ENCODE measurements at regions of chr2 and their contacts with region 1.

Region 1: DNA sequence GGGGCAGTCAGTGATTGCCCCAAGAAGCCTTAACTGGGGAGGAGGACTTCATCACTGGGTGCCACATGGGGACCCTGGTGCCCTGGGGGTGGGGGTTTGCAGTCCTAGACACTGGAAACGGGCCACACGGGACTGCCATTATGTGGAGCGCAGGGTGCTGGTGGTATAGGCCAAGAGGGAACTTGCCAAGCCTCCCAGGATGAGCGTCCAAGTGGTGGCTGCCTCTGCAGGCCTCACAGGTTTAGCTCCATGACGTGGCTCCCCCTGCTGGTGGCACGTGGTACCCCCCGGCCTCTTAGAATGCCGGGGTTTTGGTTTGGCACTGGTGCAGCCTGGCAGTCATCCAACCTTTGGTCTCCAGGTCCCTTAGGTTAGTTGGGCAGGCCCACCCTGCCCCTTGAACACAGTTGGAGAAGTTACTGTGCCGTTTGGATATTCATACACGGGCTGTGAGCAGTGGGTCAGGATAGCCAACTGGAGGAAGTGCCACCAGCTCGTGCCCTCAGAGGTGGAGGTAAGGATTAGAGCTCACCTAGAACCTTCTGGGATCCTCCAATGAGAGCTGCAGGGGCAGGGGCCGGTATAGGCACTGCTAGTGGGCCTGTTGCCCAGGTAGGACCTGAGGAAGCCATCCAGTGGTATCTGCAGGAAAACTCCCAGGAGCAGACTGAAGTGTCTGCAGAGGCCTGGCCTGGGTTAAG is 5.6 kb downstream of the PTMA start:
- DNase-seq: peak; percentile 87 to 91 (median 89)
- H3K4me3 ChIP-seq: no peak overlapping the region
- H3K4me3 Mint-ChIP-seq: peak overlapping the region; percentile 32 to 88 (median 66)
- H3K27ac ChIP-seq: peak overlapping the region; percentile 36
- H3K27ac Mint-ChIP-seq: peak overlapping the region; percentile 94 to 100 (median 98)
- H3K4me1 ChIP-seq: peaks cover 40% of the 10 kb centered on the region
- H3K4me1 Mint-ChIP-seq: peaks cover 24 to 47% (median 34%) of the 10 kb centered on the region in 4 donors
- H3K27me3 ChIP-seq: no peaks in the 10 kb centered on the region
- H3K27me3 Mint-ChIP-seq: no peaks in the 10 kb centered on the region

Region 2: GRCh38 chr2:231648587-231649174 is 65.2 kb before region 1 on chr2:
- CTCF ChIA-PET with region 1: interaction called, 17 read pairs
- POLR2A ChIA-PET with region 1: no interaction called
- intact Hi-C with region 1: loop called (anchors 1 kb)
- DNase-seq: peak in 4 of 5 donors; percentile 19 to 32 (median 26)
- H3K4me3 ChIP-seq: no peak overlapping the region
- H3K4me3 Mint-ChIP-seq: no peak overlapping the region
- H3K27ac ChIP-seq: no peak overlapping the region
- H3K27ac Mint-ChIP-seq: no peak overlapping the region
- H3K4me1 ChIP-seq: no peaks in the 10 kb centered on the region
- H3K4me1 Mint-ChIP-seq: peaks cover 0 to 5% (median under 1%) of the 10 kb centered on the region in 4 donors
- H3K27me3 ChIP-seq: no peaks in the 10 kb centered on the region
- H3K27me3 Mint-ChIP-seq: peaks cover 0 to 2% of the 10 kb centered on the region in 2 donors

Region 3: DNA sequence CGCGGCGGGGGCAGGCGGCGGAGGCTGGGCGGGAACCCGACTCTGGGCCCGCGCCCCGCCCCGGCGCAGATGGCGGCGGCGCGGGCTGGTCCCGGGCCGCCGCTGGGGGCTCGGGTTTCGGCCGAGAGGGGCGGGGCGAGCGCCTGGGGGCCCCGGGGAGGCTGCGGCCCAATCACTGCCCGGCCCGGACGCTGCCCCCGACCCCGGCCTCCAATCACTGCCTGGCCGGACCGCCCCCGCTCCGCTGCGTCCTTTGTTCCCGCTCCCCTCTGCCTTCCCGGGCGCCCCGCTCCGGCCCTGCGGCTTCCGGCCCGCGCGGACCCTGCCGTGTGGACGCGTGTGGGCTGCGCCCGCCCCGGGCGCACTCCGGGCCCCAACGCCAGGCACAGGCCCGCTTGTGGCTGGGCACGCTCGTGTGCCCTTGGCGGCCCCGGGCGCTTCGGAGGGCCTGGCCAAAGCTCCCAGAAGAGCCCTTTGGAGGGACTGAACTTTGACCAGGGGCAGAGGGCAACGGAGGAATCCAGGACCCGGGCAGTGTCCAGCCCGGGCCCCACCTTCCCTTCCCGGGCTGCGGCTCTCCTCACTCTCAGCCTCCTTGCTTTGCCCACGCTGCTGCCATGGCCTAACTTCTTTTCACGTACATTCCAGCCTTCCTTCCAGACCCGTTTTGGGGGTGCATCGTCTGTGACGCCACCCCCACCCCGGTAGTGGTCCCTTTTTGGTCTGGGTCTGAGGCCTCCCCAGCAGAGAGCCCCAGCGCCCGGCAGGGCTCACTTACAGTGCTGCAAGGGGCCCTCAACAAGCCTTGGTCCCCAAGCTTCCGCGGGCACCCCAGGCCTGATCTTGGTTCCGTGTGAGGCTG is 32.7 kb before region 1 on chr2:
- CTCF ChIA-PET with region 1: interaction called, 742 read pairs
- POLR2A ChIA-PET with region 1: interaction called, 136 read pairs
- intact Hi-C with region 1: loop called (anchors 1 kb)
- DNase-seq: no peak
- H3K4me3 ChIP-seq: no peak overlapping the region
- H3K4me3 Mint-ChIP-seq: peak overlapping the region in 7 of 8 donors; percentile 10 to 82 (median 58)
- H3K27ac ChIP-seq: no peak overlapping the region
- H3K27ac Mint-ChIP-seq: no peak overlapping the region
- H3K4me1 ChIP-seq: no peaks in the 10 kb centered on the region
- H3K4me1 Mint-ChIP-seq: peaks cover 3 to 11% (median 7%) of the 10 kb centered on the region in 4 donors
- H3K27me3 ChIP-seq: peaks cover 3% of the 10 kb centered on the region
- H3K27me3 Mint-ChIP-seq: peaks cover 13 to 16% of the 10 kb centered on the region in 2 donors

Region 4: GRCh38 chr2:231701456-231702373 is 12.2 kb before region 1 on chr2:
- CTCF ChIA-PET with region 1: interaction called, 86 read pairs
- POLR2A ChIA-PET with region 1: interaction called, 32 read pairs
- intact Hi-C with region 1: loop called (anchors 1 kb)
- DNase-seq: no peak
- H3K4me3 ChIP-seq: no peak overlapping the region
- H3K4me3 Mint-ChIP-seq: peak overlapping the region in 1 of 8 donors; percentile 29
- H3K27ac ChIP-seq: no peak overlapping the region
- H3K27ac Mint-ChIP-seq: no peak overlapping the region
- H3K4me1 ChIP-seq: peaks cover 12% of the 10 kb centered on the region
- H3K4me1 Mint-ChIP-seq: peaks cover 6 to 24% (median 10%) of the 10 kb centered on the region in 4 donors
- H3K27me3 ChIP-seq: no peaks in the 10 kb centered on the region
- H3K27me3 Mint-ChIP-seq: no peaks in the 10 kb centered on the region

Measured in CD4-positive, alpha-beta memory T cell (primary cell).